ENCODE measurements at regions of chr15 and their contacts with region 1.

Region 1: DNA sequence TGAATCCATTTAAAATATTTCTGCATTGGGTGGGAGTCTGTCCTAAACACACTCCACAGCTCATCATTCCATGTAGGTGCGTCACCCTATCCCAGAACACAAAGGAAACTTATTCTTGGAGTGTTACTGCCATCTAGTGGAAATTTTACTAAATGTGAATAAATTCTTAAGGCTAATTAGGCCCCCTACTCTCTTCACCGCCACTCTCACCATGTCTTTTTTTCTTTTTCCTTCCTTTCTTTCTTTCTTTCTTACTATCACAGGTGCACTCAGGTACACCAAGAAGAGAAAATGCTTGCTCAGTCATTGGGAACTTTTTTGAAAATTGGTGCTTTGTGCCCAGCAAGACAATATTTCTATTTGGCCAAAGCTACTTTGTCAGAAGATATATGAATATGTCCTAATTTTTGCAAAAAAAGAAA is 26.4 kb upstream of the ATP8B4 start:
- DNase-seq: peak in 4 of 5 donors; percentile 28 to 50 (median 34)
- H3K4me3 ChIP-seq: no peak overlapping the region
- H3K4me3 Mint-ChIP-seq: no peak overlapping the region
- H3K27ac ChIP-seq: no peak overlapping the region
- H3K27ac Mint-ChIP-seq: no peak overlapping the region
- H3K4me1 ChIP-seq: no peaks in the 10 kb centered on the region
- H3K4me1 Mint-ChIP-seq: no peaks in the 10 kb centered on the region
- H3K27me3 ChIP-seq: no peaks in the 10 kb centered on the region
- H3K27me3 Mint-ChIP-seq: no peaks in the 10 kb centered on the region

Region 2: DNA sequence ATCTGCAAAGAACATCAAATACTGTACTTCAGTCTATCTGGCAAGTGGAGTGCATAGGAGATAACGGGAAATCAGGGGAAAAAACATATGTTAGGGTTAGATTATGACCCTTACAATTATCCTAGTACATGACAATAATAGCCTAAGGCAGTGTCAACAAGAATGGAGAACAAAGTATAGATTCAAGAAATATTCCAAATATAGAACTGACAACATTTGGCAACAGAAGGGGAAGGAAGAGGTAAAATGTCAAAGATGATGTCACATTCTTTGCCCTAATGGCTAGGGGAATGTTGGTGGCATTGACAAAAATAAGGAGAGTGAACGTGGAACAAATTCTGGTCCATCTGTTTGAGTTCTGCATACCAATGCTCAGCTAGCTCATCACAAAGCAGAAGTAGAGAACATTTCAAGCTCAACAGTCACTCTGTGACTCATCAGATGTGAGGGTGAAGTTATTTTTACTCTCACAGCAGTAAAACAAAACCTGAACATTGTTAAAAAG is 10.9 kb before region 1 on chr15:
- CTCF ChIA-PET with region 1: interaction called, 16 read pairs
- POLR2A ChIA-PET with region 1: no interaction called
- intact Hi-C with region 1: no loop called
- DNase-seq: no peak
- H3K4me3 ChIP-seq: no peak overlapping the region
- H3K4me3 Mint-ChIP-seq: no peak overlapping the region
- H3K27ac ChIP-seq: no peak overlapping the region
- H3K27ac Mint-ChIP-seq: no peak overlapping the region
- H3K4me1 ChIP-seq: no peaks in the 10 kb centered on the region
- H3K4me1 Mint-ChIP-seq: peaks cover 5 to 8% (median 6%) of the 10 kb centered on the region in 4 donors
- H3K27me3 ChIP-seq: no peaks in the 10 kb centered on the region
- H3K27me3 Mint-ChIP-seq: peaks cover 6 to 17% of the 10 kb centered on the region in 2 donors

Measured in CD4-positive, alpha-beta memory T cell (primary cell).